ENCODE measurements at regions of chr16 and their contacts with region 1.

Region 1: DNA sequence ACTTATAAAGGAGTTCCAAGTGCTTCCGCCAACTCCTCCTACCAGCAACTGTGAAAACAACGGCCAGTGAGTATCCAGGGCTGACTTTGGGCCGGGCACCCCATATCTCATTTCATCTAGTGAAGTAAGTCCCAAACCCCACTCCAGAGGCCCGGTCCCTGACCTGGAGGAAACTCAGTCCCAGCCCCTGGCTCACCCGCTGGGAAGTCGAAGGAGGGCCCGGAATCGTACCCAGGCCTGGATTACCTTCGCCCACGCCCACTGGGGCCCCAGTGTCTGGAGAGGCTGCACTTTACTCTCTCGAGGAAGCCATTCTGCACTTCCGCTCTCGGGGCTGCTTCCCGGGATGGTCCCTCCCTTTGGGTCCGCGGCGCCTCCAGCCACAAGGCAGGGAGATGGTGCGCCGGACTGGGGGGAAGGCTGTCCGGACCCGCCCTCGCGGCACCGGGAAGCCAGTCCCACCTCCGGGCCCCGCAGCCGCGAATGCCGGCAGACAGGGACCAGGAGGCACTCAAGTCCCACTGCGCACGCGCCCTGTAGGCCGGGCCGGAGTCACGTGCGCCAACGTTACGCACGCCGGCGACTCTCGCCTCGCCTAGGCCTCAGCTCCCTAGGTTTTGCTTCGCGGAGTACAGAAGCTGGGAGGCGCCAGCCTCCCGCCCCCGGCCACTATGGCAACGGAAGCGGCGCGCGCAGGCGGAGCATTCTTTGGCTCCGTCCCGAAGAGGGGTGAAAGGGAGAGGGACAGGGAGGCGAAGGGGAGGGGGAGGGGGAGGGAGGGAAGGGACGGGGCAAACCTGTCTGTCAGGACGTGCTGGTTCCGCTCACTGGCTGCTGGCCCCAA is at the start of gene CMTR2:
- H3K4me3 Mint-ChIP-seq: peak within 1 kb of the TSS; percentile 87
- H3K27ac Mint-ChIP-seq: peak within 1 kb of the TSS; percentile 90
- H3K4me1 Mint-ChIP-seq: peaks cover 21% of the 10 kb centered on the region
- H3K27me3 Mint-ChIP-seq: peaks cover 17% of the 10 kb centered on the region

Region 2: GRCh38 chr16:71254832-71255570 is 34.1 kb before region 1 on chr16:
- intact Hi-C with region 1: loop called (anchors 5 kb)
- H3K4me3 Mint-ChIP-seq: no peak overlapping the region
- H3K27ac Mint-ChIP-seq: peak overlapping the region; percentile 73
- H3K4me1 Mint-ChIP-seq: peaks cover 61% of the 10 kb centered on the region
- H3K27me3 Mint-ChIP-seq: peaks cover 14% of the 10 kb centered on the region

Region 3: GRCh38 chr16:71461686-71462648 is 172.9 kb after region 1 on chr16 and contains the start of gene ZNF23:
- intact Hi-C with region 1: loop called (anchors 10 kb)
- H3K4me3 Mint-ChIP-seq: peak within 1 kb of the TSS; percentile 91
- H3K27ac Mint-ChIP-seq: peak within 1 kb of the TSS; percentile 81
- H3K4me1 Mint-ChIP-seq: peaks cover 5% of the 10 kb centered on the region
- H3K27me3 Mint-ChIP-seq: peaks cover 1% of the 10 kb centered on the region

Measured in dendritic cell treated with granulocyte-macrophage colony-stimulating factor and Interleukin-4, amounts not matched to agents 40 ng/mL and 50 ng/mL, for 4 days (primary cell).